Activated naive CD4-positive, alpha-beta T cell treated with anti-CD3 and anti-CD28 coated beads for 36 hours (primary cell): ENCODE measurements at regions of chr12 and their contacts with region 1.

Region 1: GRCh38 chr12:46661110-46661845 is 164.5 kb downstream of the SLC38A4 start:
- DNase-seq: peak; percentile 25
- H3K4me3 Mint-ChIP-seq: no peak overlapping the region
- H3K27ac Mint-ChIP-seq: no peak overlapping the region
- H3K4me1 Mint-ChIP-seq: peaks cover 29% of the 10 kb centered on the region
- H3K27me3 Mint-ChIP-seq: no peaks in the 10 kb centered on the region

Region 2: GRCh38 chr12:46217541-46218321 is 443.5 kb before region 1 on chr12:
- CTCF ChIA-PET with region 1: no interaction called
- intact Hi-C with region 1: loop called (anchors 5 kb)
- DNase-seq: peak; percentile 74
- H3K4me3 Mint-ChIP-seq: peak overlapping the region; percentile 33
- H3K27ac Mint-ChIP-seq: peak overlapping the region; percentile 100
- H3K4me1 Mint-ChIP-seq: peaks cover 95% of the 10 kb centered on the region
- H3K27me3 Mint-ChIP-seq: no peaks in the 10 kb centered on the region

Region 3: DNA sequence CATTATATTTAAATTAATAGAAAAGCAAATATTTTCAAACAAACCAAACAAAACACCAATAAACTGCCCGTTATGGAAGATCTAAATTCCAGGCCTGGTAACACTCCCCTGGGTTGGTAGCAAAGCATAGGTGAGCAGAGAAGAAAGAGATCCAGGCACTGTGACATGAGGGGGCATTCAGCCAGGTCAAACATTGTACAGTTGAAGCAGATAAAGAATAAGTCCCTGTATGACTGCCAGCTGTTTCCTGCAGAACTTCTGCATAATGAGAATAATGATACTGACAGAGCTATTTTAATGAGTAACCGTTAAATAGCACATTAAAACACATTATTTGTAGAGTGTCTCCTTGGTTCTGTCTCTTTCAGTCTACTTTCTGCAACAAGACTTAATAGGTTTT is 427.9 kb before region 1 on chr12:
- CTCF ChIA-PET with region 1: no interaction called
- intact Hi-C with region 1: no loop called
- DNase-seq: no peak
- H3K4me3 Mint-ChIP-seq: no peak overlapping the region
- H3K27ac Mint-ChIP-seq: peak overlapping the region; percentile 68
- H3K4me1 Mint-ChIP-seq: peaks cover 73% of the 10 kb centered on the region
- H3K27me3 Mint-ChIP-seq: no peaks in the 10 kb centered on the region

Region 4: GRCh38 chr12:46382964-46383653 is 278.2 kb before region 1 on chr12:
- CTCF ChIA-PET with region 1: interaction called, 3 read pairs
- intact Hi-C with region 1: loop called (anchors 1 kb)
- DNase-seq: peak; percentile 96
- H3K4me3 Mint-ChIP-seq: peak overlapping the region; percentile 77
- H3K27ac Mint-ChIP-seq: peak overlapping the region; percentile 87
- H3K4me1 Mint-ChIP-seq: peaks cover 38% of the 10 kb centered on the region
- H3K27me3 Mint-ChIP-seq: no peaks in the 10 kb centered on the region

Region 5: GRCh38 chr12:46459861-46460545 is 201.3 kb before region 1 on chr12:
- CTCF ChIA-PET with region 1: no interaction called
- intact Hi-C with region 1: loop called (anchors 1 kb)
- DNase-seq: peak; percentile 48
- H3K4me3 Mint-ChIP-seq: peak overlapping the region; percentile 71
- H3K27ac Mint-ChIP-seq: peak overlapping the region; percentile 91
- H3K4me1 Mint-ChIP-seq: peaks cover 64% of the 10 kb centered on the region
- H3K27me3 Mint-ChIP-seq: no peaks in the 10 kb centered on the region

Region 6: GRCh38 chr12:46904406-46905238 is 243.3 kb after region 1 on chr12:
- CTCF ChIA-PET with region 1: no interaction called
- intact Hi-C with region 1: no loop called
- DNase-seq: no peak
- H3K4me3 Mint-ChIP-seq: no peak overlapping the region
- H3K27ac Mint-ChIP-seq: no peak overlapping the region
- H3K4me1 Mint-ChIP-seq: peaks cover 9% of the 10 kb centered on the region
- H3K27me3 Mint-ChIP-seq: peaks cover 4% of the 10 kb centered on the region

Region 7: GRCh38 chr12:47111392-47111778 is 450.1 kb after region 1 on chr12:
- CTCF ChIA-PET with region 1: no interaction called
- intact Hi-C with region 1: no loop called
- DNase-seq: peak; percentile 41
- H3K4me3 Mint-ChIP-seq: no peak overlapping the region
- H3K27ac Mint-ChIP-seq: no peak overlapping the region
- H3K4me1 Mint-ChIP-seq: peaks cover 33% of the 10 kb centered on the region
- H3K27me3 Mint-ChIP-seq: no peaks in the 10 kb centered on the region